MCF 10A (cell line): ENCODE measurements at regions of chr4 and their contacts with region 1.

Region 1: GRCh38 chr4:164937576-164938270 is 39.7 kb downstream of the TRIM61 start:
- DNase-seq: peak; percentile 54
- H3K4me3 Mint-ChIP-seq: no peak overlapping the region
- H3K27ac Mint-ChIP-seq: no peak overlapping the region
- H3K4me1 Mint-ChIP-seq: no peaks in the 10 kb centered on the region
- H3K27me3 Mint-ChIP-seq: no peaks in the 10 kb centered on the region
- CTCF ChIP-seq: peak; percentile 18

Region 2: GRCh38 chr4:164949448-164950143 is 11.9 kb after region 1 on chr4:
- CTCF ChIA-PET with region 1: interaction called, 72 read pairs
- POLR2A ChIA-PET with region 1: interaction called, 8 read pairs
- intact Hi-C with region 1: loop called (anchors 1 kb)
- DNase-seq: no peak
- H3K4me3 Mint-ChIP-seq: no peak overlapping the region
- H3K27ac Mint-ChIP-seq: no peak overlapping the region
- H3K4me1 Mint-ChIP-seq: no peaks in the 10 kb centered on the region
- H3K27me3 Mint-ChIP-seq: no peaks in the 10 kb centered on the region
- CTCF ChIP-seq: peak; percentile 32

Region 3: DNA sequence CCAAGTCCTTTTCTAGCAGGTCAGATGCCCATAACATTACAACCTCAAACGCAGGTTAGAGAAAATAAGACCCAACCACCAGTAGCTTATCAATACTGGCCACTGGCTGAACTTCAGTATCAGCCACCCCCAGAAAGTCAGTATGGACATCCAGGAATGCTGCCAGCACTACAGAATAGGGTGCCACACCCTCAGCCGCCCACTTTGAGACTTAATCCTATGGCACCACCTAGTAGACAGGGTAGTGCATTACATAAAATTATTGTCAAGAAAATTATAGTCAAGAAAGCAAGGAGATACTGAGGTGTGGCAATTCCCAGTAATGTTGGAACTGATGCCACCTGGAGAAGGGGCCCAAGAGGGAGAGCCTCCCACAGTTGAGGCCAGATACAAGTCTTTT is 59.6 kb after region 1 on chr4:
- CTCF ChIA-PET with region 1: interaction called, 3 read pairs
- POLR2A ChIA-PET with region 1: no interaction called
- intact Hi-C with region 1: loop called (anchors 2 kb)
- DNase-seq: peak; percentile 70
- H3K4me3 Mint-ChIP-seq: no peak overlapping the region
- H3K27ac Mint-ChIP-seq: no peak overlapping the region
- H3K4me1 Mint-ChIP-seq: no peaks in the 10 kb centered on the region
- H3K27me3 Mint-ChIP-seq: no peaks in the 10 kb centered on the region
- CTCF ChIP-seq: peak; percentile 44